ENCODE measurements at regions of chr5 and their contacts with region 1.

Region 1: GRCh38 chr5:87393331-87393730 is 19.4 kb downstream of the CCNH start:
- DNase-seq: no peak
- H3K4me3 ChIP-seq: no peak overlapping the region
- H3K27ac ChIP-seq: no peak overlapping the region
- H3K4me1 ChIP-seq: no peaks in the 10 kb centered on the region
- H3K27me3 ChIP-seq: no peaks in the 10 kb centered on the region
- CTCF ChIP-seq: no peak
- EP300 ChIP-seq: no peak
- POLR2A ChIP-seq: no peak

Region 2: DNA sequence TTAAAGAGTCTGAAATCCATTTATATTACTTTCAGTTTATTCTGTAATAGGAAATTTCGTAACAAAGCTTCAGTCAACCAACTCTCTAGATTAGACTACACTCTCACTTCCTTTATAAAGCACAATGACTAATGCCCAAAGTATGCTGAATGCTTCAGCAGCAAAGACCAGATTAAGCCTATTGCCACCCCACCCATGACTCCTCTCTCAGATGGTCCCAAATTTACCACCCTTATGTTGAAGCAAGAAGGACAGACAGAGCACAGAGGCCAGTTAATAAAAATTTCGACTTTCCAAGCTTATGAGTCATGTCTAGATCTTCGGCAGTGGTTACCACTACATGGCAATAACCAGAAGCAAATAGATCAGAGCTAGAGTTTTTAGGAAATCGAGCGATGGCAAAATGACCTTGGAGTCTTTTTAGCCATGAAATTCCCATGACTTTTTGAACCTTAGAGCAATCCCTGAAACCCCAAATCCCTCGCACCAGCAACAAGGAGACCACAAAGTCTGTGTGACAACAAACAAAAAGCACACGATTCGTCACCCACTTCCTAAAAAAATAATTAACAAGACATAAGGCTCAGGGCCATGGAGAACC is 413.4 kb before region 1 on chr5:
- in situ Hi-C with region 1: no loop called
- intact Hi-C with region 1: no loop called
- DNase-seq: no peak
- H3K4me3 ChIP-seq: no peak overlapping the region
- H3K27ac ChIP-seq: peak overlapping the region; percentile 22 to 42 (median 33)
- H3K4me1 ChIP-seq: no peaks in the 10 kb centered on the region
- H3K27me3 ChIP-seq: no peaks in the 10 kb centered on the region
- CTCF ChIP-seq: no peak
- EP300 ChIP-seq: no peak
- POLR2A ChIP-seq: no peak

Region 3: DNA sequence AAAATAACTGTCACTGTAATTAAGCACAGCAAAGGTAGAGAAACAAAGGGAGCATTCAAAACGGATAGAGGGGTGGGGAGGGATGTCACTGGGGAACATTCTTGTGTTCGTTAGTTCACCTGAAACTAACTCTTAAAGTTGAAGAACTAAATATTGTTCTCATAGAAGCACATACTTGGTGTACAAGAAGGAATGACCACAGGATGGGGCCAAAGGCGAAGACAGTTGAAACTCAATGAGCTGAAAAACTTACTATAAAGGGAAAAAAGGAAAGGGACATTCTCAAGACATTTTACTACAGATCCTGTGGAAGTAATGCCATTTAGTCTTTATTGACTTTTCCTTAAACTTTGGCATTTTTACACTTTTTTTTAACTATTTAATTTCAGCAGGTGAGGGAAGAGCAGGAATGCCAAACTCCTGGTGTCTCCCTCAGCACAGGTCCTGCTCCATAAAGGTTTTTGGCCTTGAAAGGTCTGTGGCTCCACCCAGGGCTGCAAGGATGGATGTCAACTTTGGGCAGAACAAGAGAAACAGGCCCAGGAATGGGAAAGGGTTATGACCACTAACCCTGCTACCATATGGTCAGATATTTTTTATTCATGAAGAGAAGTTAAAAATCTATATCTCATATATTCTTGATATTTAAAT is 323.2 kb before region 1 on chr5:
- in situ Hi-C with region 1: loop called in 1 of 4 experiments (anchors 25 kb)
- intact Hi-C with region 1: no loop called
- DNase-seq: peak; percentile 49
- H3K4me3 ChIP-seq: no peak overlapping the region
- H3K27ac ChIP-seq: no peak overlapping the region
- H3K4me1 ChIP-seq: peaks cover 0 to 7% (median 3%) of the 10 kb centered on the region in 4 donors
- H3K27me3 ChIP-seq: no peaks in the 10 kb centered on the region
- CTCF ChIP-seq: peak in 4 of 5 experiments; percentile 32 to 44 (median 36)
- EP300 ChIP-seq: no peak
- POLR2A ChIP-seq: no peak

Region 4: DNA sequence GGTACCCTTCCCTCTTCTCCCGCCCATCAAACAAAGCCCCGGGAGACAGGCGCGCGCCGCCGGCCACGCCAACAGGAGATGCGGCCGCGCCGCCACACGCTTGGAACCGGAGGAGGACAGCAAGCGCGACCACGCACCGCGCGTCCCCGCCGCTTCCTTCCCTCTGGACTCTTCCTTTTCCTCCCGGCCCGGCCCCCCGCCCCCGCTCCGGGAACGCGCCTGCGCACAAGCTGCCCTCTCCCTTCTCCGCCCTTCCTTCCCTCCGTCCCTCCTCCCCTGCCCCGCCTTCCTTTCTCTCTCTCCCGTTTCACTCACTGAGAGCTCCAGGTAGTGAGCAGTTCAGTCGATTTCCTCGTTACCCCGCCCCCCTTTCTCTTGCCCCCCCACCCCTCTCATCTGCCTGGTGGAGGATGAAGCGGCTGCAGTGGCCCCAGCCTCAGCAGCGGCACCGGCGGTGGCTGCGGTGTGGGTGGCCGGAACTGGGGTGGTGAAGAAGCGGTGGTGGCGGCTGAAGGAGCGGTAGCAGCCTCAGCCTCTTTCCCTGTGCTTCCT is 125.7 kb before region 1 on chr5 and contains the start of gene RASA1:
- in situ Hi-C with region 1: loop called in 1 of 4 experiments (anchors 25 kb)
- intact Hi-C with region 1: no loop called
- DNase-seq: peak; percentile 96
- H3K4me3 ChIP-seq: peak within 1 kb of the TSS; percentile 64 to 86 (median 82)
- H3K27ac ChIP-seq: peak within 1 kb of the TSS; percentile 92 to 98 (median 94)
- H3K4me1 ChIP-seq: peaks cover 5 to 36% (median 16%) of the 10 kb centered on the region in 4 donors
- H3K27me3 ChIP-seq: no peaks in the 10 kb centered on the region
- CTCF ChIP-seq: no peak
- EP300 ChIP-seq: no peak
- POLR2A ChIP-seq: peak; percentile 89
- total RNA-seq, gene RASA1: 22.3 to 33.3 (median 28.2) TPM